HEK293 (cell line): ENCODE measurements at regions of chr10 and their contacts with region 1.

Region 1: GRCh38 chr10:116287906-116288501 is 15.0 kb upstream of the GFRA1 start:
- H3K4me3 ChIP-seq: no peak overlapping the region
- H3K27ac ChIP-seq: no peak overlapping the region
- H3K4me1 ChIP-seq: no peaks in the 10 kb centered on the region
- CTCF ChIP-seq: peak; percentile 55; the same call in 1 of the 2 replicates

Region 2: DNA sequence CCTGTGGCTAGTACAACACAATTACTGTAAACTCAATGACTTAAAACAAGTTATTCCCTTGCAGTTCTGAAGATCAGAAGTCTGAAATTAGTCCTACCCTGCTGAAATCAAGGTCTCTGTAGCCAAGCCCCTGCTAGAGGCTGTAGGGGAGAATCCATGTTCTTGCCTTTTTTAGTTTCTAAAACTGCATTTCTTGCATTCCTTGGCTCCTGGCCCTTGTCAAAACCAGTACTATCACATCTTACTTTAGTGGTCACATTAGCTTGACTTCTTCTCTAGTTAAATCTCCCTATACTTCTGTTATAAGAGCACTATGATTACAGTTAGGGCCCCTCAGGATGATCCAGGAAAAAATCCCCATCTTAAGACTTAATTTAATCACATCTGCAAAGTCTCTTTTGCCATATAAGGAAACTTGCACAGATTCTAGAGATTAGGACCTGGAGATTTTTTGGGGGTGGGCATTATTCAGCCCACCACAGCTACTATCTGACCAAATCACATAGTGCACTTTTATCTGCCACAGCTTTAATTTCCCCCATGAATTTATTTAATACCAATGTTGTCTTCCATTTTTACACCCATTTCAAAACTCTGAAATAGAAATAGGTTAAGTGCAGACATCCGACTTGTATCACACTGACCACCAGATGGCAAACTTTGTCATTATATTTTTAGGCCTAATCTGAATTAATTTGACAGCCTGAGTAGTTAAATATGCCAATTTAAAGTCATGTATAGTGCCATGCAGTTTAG is 581.8 kb before region 1 on chr10:
- CTCF ChIA-PET with region 1: interaction called, 42 read pairs
- POLR2A ChIA-PET with region 1: no interaction called
- H3K4me3 ChIP-seq: no peak overlapping the region
- H3K27ac ChIP-seq: no peak overlapping the region
- H3K4me1 ChIP-seq: no peaks in the 10 kb centered on the region
- CTCF ChIP-seq: 0 out of 2 replicates have a peak, but pooled peaks have one; percentile 11

Region 3: DNA sequence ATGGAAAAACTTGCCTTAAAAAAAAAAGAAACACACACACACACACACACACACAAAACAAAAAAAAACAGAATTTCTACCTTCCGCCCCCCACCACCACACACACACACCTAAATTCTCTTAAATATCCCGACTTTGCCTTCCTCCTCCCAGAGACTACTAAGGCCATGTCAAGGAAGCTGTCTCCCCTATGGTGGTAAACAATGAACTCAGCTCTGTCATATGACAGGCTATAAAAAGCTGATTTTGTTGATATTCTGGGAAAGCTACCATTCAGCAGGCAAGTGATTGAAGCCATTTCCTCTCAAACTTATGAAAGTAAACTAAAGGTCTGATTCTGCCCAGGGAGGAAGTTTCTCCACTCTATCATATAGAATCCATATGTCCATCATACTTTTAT is 486.0 kb before region 1 on chr10:
- CTCF ChIA-PET with region 1: interaction called, 29 read pairs
- POLR2A ChIA-PET with region 1: no interaction called
- H3K4me3 ChIP-seq: no peak overlapping the region
- H3K27ac ChIP-seq: no peak overlapping the region
- H3K4me1 ChIP-seq: no peaks in the 10 kb centered on the region
- CTCF ChIP-seq: no peak

Region 4: GRCh38 chr10:115829521-115830205 is 458.3 kb before region 1 on chr10:
- CTCF ChIA-PET with region 1: interaction called, 14 read pairs
- POLR2A ChIA-PET with region 1: no interaction called
- H3K4me3 ChIP-seq: no peak overlapping the region
- H3K27ac ChIP-seq: no peak overlapping the region
- H3K4me1 ChIP-seq: no peaks in the 10 kb centered on the region
- CTCF ChIP-seq: no peak